ENCODE measurements at regions of chr11 and their contacts with region 1.

Region 1: DNA sequence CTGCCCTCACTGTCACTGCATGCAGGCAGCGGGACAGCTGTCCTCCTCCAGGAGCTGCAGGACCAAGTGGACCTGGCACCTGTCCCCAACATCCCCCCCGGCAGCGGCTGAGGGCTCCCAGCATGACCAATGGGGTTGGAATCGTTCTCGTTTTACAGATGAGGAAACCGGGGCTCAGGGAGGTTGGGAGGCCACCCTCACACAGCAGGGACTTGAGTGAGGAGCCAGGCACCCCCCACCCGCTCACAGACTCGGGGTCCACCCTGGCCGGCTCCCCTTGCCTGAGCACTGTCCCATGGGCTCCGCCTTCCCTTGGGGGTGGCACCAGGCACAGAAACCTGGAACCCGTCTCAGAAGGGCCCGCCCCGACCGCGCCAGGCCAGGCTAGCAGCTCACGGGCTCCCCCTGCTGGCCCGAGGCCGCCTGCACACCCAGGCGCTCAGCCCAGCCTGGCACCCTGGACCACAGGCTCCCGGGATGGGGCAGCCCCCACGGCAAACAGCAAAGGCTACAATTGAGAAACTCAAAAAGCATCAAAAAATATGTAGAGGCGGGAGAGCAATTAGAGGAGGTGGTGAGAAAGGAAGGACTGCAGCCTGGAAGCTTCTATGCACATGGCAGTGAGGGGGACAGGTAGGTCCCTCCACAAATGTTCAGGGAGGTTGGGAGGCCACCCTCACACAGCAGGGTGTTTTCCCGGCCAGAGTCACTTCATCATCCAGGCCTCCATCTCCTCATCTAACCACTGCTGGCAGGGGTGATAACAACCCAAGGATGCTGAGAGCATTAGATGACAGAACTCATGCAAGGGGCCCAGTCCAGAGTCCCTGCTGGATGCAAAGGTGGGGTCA is 12.8 kb downstream of the MACROD1 start:
- DNase-seq: peak; percentile 76
- ATAC-seq: peak; percentile 96
- H3K4me3 ChIP-seq: peak overlapping the region; percentile 36; the same call in 1 of the 2 replicates
- H3K27ac ChIP-seq: no peak overlapping the region
- H3K4me1 ChIP-seq: no peaks in the 10 kb centered on the region
- H3K27me3 ChIP-seq: no peaks in the 10 kb centered on the region
- CTCF ChIP-seq: peak; percentile 99

Region 2: GRCh38 chr11:64000026-64000739 is 152.9 kb before region 1 on chr11:
- CTCF ChIA-PET with region 1: interaction called, 5 read pairs
- POLR2A ChIA-PET with region 1: no interaction called
- intact Hi-C with region 1: loop called (anchors 2 kb)
- DNase-seq: peak; percentile 63
- ATAC-seq: peak; percentile 50
- H3K4me3 ChIP-seq: peak overlapping the region; percentile 43
- H3K27ac ChIP-seq: no peak overlapping the region
- H3K4me1 ChIP-seq: peaks cover 13% of the 10 kb centered on the region; the same call in 1 of the 2 replicates
- H3K27me3 ChIP-seq: no peaks in the 10 kb centered on the region
- CTCF ChIP-seq: peak; percentile 60

Region 3: DNA sequence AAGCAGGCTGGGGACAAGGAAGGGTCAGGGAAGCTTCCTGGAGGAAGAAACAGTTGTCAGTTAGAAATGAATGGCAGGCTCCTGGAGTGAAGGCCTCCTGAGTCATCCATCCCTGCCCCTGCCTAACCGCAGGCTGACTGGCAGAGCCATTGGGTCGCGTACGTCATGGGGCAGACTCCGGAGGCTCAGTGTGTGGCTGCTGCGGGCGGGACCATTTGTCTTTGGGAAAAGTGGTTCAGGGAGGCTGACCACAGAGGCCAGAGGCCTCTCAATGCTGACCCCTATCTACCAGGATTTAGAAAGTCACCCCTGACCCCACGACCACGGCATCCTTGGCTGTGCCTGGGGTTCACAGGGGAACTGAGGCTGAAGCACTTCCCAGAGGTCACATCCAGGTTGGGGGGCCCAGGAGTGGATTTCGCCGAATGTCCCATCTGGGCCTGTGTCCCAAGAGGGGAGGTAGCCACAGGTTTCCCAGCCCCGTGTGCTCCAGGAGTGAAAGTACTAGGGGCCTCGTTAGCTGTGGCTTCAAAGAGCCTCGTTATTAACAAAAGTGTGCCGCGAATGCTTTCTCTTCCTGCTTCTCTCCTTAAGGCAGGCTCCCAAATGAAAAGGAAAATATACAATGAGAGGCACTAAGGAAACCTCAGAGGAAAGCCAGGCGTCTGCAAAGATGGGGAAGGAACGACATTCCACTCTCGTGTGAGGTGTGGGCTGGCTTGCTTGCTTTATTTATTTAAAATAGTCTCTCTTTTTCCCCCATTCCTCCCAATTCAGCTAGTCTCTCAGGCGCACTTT is 58.4 kb before region 1 on chr11:
- CTCF ChIA-PET with region 1: no interaction called
- POLR2A ChIA-PET with region 1: no interaction called
- intact Hi-C with region 1: loop called (anchors 5 kb)
- DNase-seq: peak; percentile 96
- ATAC-seq: peak; percentile 100
- H3K4me3 ChIP-seq: no peak overlapping the region
- H3K27ac ChIP-seq: peak overlapping the region; percentile 49
- H3K4me1 ChIP-seq: peaks cover 20% of the 10 kb centered on the region
- H3K27me3 ChIP-seq: no peaks in the 10 kb centered on the region
- CTCF ChIP-seq: peak; percentile 39; the same call in 1 of the 2 replicates